ENCODE measurements at regions of chr4 and their contacts with region 1.

Region 1: GRCh38 chr4:168486961-168487305 is 6.6 kb upstream of the DDX60L start:
- DNase-seq: peak in 1 of 2 experiments; percentile 78
- H3K4me3 ChIP-seq: peak overlapping the region; percentile 23; the same call in 1 of the 2 replicates
- H3K27ac ChIP-seq: peak overlapping the region; percentile 92
- H3K4me1 ChIP-seq: peaks cover 55% of the 10 kb centered on the region
- H3K27me3 ChIP-seq: no peaks in the 10 kb centered on the region
- CTCF ChIP-seq: no peak

Region 2: GRCh38 chr4:168408620-168409019 is 78.3 kb before region 1 on chr4:
- CTCF ChIA-PET with region 1: no interaction called
- POLR2A ChIA-PET with region 1: interaction called, 11 read pairs
- intact Hi-C with region 1: no loop called
- DNase-seq: peak in 1 of 2 experiments; percentile 10
- H3K4me3 ChIP-seq: no peak overlapping the region
- H3K27ac ChIP-seq: no peak overlapping the region
- H3K4me1 ChIP-seq: 0 out of 2 replicates have a peak, but pooled peaks cover 7% of the 10 kb centered on the region
- H3K27me3 ChIP-seq: no peaks in the 10 kb centered on the region
- CTCF ChIP-seq: no peak

Region 3: DNA sequence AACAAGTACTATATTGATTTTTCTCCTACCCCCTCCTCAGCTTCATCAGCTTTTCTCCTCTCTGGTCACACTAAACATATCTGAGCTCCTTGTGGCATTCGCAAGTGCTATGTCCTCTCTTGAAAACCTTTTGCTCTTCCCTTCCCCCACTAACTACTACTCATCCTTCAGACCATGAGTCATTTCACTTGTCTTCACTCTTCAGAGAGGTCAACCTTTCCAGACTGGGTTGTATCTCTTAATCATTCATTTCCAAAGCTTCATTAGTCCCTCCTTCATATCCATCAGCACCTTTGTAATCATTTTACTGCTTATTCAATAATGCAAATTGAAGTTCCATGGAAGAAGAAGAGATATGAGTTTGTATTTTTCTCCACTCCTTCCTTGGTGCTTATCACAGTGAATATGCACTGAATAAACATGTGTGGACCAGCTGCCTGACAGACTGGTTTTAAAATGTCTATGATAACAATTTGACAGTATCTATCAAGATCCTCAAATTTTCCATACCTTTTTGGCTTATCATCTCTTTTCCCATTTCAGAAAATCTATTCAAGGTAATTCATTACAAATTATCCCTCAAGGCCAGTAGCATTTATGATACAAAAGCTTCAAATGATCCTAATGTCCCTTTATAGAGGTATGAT is 35.1 kb before region 1 on chr4:
- CTCF ChIA-PET with region 1: no interaction called
- POLR2A ChIA-PET with region 1: no interaction called
- intact Hi-C with region 1: no loop called
- DNase-seq: peak in 1 of 2 experiments; percentile 64
- H3K4me3 ChIP-seq: no peak overlapping the region
- H3K27ac ChIP-seq: no peak overlapping the region
- H3K4me1 ChIP-seq: peaks cover 15% of the 10 kb centered on the region
- H3K27me3 ChIP-seq: no peaks in the 10 kb centered on the region
- CTCF ChIP-seq: no peak

Region 4: DNA sequence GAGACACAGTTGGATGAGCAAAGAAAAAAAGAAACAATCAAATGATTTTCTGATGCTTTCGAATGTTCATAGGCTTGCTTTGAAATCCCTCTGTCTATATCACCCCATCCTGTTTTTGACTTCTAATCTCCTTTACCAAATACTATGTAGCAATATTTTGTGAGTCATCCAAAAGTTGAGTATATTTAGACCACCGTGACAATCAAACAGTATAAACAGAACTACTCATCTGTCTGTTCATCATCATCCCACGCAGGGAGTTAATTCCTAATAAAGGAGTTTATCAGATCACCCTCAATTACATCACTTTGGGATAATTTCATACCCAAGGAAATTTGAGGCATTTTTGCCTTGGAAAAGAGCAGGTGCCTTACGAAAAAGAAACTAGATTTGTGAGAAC is 310.2 kb after region 1 on chr4:
- CTCF ChIA-PET with region 1: no interaction called
- POLR2A ChIA-PET with region 1: no interaction called
- intact Hi-C with region 1: loop called (anchors 1 kb)
- DNase-seq: peak in 1 of 2 experiments; percentile 62
- H3K4me3 ChIP-seq: no peak overlapping the region; the same call in 1 of the 2 replicates
- H3K27ac ChIP-seq: peak overlapping the region; percentile 56
- H3K4me1 ChIP-seq: peaks cover 25% of the 10 kb centered on the region
- H3K27me3 ChIP-seq: no peaks in the 10 kb centered on the region
- CTCF ChIP-seq: no peak

Measured in PC-9 (cell line).